ENCODE measurements at regions of chr15 and their contacts with region 1.

Region 1: GRCh38 chr15:70488002-70488605 is 275.3 kb downstream of the UACA start:
- DNase-seq: peak; percentile 60
- H3K4me3 ChIP-seq: no peak overlapping the region
- H3K27ac ChIP-seq: no peak overlapping the region
- H3K4me1 ChIP-seq: peaks cover 22% of the 10 kb centered on the region
- H3K27me3 ChIP-seq: peaks cover 11% of the 10 kb centered on the region
- CTCF ChIP-seq: peak; percentile 98 to 99

Region 2: DNA sequence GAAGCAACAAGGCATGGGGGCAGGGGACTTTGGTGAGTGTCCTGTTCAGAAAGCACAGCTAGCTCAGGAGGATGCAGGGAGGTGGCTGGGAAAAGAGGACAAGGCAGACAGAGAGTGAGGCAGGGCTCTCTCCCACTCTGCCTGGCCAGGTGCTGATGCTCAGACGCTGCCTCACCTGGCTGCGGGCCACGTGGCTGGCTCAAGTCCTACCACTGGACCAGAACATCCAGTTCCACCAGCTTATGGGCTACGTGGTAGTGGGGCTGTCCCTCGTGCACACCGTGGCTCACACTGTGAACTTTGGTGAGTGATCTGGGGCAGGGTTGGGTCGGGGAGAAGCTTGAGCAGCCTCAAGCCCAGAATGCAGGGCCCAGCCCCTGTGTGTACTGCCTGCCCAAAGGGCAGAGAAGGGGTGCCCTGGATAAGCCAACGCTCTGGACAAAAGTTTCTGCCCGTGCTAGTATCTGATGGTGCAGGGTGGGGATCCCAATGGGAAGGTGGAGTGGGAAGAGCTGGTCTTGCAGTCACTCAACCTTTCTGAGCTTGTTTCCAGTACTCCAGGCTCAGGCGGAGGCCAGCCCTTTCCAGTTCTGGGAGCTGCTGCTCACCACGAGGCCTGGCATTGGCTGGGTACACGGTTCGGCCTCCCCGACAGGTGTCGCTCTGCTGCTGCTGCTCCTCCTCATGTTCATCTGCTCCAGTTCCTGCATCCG is 1452.7 kb before region 1 on chr15:
- CTCF ChIA-PET with region 1: interaction called, 18 read pairs
- dilution Hi-C with region 1: no loop called
- in situ Hi-C with region 1: no loop called
- intact Hi-C with region 1: no loop called
- DNase-seq: peak; percentile 80
- H3K4me3 ChIP-seq: no peak overlapping the region
- H3K27ac ChIP-seq: no peak overlapping the region
- H3K4me1 ChIP-seq: peaks cover 30% of the 10 kb centered on the region
- H3K27me3 ChIP-seq: no peaks in the 10 kb centered on the region
- CTCF ChIP-seq: no peak

Region 3: GRCh38 chr15:69523010-69524001 is 964.8 kb before region 1 on chr15:
- CTCF ChIA-PET with region 1: no interaction called
- dilution Hi-C with region 1: no loop called
- in situ Hi-C with region 1: no loop called
- intact Hi-C with region 1: loop called (anchors 2 kb)
- DNase-seq: peak; percentile 50
- H3K4me3 ChIP-seq: no peak overlapping the region
- H3K27ac ChIP-seq: no peak overlapping the region
- H3K4me1 ChIP-seq: no peaks in the 10 kb centered on the region
- H3K27me3 ChIP-seq: no peaks in the 10 kb centered on the region
- CTCF ChIP-seq: peak; percentile 79 to 80

Region 4: GRCh38 chr15:69729161-69729748 is 758.8 kb before region 1 on chr15:
- CTCF ChIA-PET with region 1: interaction called, 7 read pairs
- dilution Hi-C with region 1: no loop called
- in situ Hi-C with region 1: loop called in 1 of 2 experiments (anchors 25 kb)
- intact Hi-C with region 1: loop called (anchors 1 kb)
- DNase-seq: no peak
- H3K4me3 ChIP-seq: no peak overlapping the region
- H3K27ac ChIP-seq: no peak overlapping the region
- H3K4me1 ChIP-seq: no peaks in the 10 kb centered on the region
- H3K27me3 ChIP-seq: peaks cover 2% of the 10 kb centered on the region
- CTCF ChIP-seq: peak; percentile 73

Region 5: DNA sequence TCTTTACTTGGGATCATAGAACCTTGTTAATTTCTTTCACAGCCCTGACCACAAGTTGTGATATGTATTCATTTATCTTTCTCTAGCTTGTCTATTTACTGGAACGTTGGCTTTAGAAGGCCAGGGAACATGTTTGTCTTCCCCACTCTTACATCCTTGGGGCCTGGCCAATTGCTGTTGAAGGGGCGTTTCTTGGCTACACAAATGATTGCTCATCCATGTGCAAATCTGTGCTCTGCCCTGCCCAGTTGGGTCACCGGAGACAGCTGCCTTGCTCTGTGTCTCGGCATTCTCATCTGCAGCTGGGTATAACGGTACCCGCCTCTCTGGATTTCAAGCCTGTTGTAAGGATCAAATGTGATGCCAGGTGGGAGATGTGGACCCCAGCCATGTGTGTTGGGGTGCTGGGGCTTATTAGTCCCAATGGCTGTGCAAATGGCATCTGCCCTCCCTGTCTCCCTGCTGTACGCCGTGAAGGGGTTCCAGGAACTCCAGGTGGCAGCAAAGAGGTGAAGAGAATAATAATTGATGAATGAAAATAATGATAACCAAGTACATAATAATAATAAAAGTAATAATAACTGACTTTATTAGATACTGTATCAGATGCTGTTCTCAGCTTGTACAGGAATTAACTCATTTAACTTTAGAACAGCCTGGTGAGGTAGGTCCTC is 366.3 kb before region 1 on chr15:
- CTCF ChIA-PET with region 1: no interaction called
- dilution Hi-C with region 1: no loop called
- in situ Hi-C with region 1: no loop called
- intact Hi-C with region 1: loop called (anchors 5 kb)
- DNase-seq: peak; percentile 63
- H3K4me3 ChIP-seq: no peak overlapping the region
- H3K27ac ChIP-seq: no peak overlapping the region
- H3K4me1 ChIP-seq: no peaks in the 10 kb centered on the region
- H3K27me3 ChIP-seq: no peaks in the 10 kb centered on the region
- CTCF ChIP-seq: peak in 1 of 2 donors; percentile 43

Region 6: GRCh38 chr15:70271422-70272088 is 216.5 kb before region 1 on chr15:
- CTCF ChIA-PET with region 1: interaction called, 3 read pairs
- dilution Hi-C with region 1: no loop called
- in situ Hi-C with region 1: no loop called
- intact Hi-C with region 1: loop called (anchors 10 kb)
- DNase-seq: peak; percentile 93
- H3K4me3 ChIP-seq: no peak overlapping the region
- H3K27ac ChIP-seq: no peak overlapping the region
- H3K4me1 ChIP-seq: peaks cover 29% of the 10 kb centered on the region
- H3K27me3 ChIP-seq: no peaks in the 10 kb centered on the region
- CTCF ChIP-seq: no peak

Region 7: GRCh38 chr15:70466895-70467529 is 21.1 kb before region 1 on chr15:
- CTCF ChIA-PET with region 1: interaction called, 7 read pairs
- dilution Hi-C with region 1: no loop called
- in situ Hi-C with region 1: no loop called
- intact Hi-C with region 1: loop called (anchors 2 kb)
- DNase-seq: peak; percentile 51
- H3K4me3 ChIP-seq: no peak overlapping the region
- H3K27ac ChIP-seq: no peak overlapping the region
- H3K4me1 ChIP-seq: peaks cover 6% of the 10 kb centered on the region
- H3K27me3 ChIP-seq: peaks cover 20% of the 10 kb centered on the region
- CTCF ChIP-seq: peak; percentile 70 to 83

Measured in mammary epithelial cell (primary cell).